Activated CD4-positive, alpha-beta memory T cell treated with anti-CD3 and anti-CD28 coated beads for 36 hours (primary cell): ENCODE measurements at regions of chr17 and their contacts with region 1.

Region 1: GRCh38 chr17:48024937-48025906 is 12.4 kb downstream of the COPZ2 start:
- DNase-seq: peak; percentile 99
- H3K4me3 Mint-ChIP-seq: peak overlapping the region; percentile 82
- H3K27ac Mint-ChIP-seq: peak overlapping the region; percentile 34
- H3K4me1 Mint-ChIP-seq: peaks cover 22% of the 10 kb centered on the region
- H3K27me3 Mint-ChIP-seq: peaks cover 11% of the 10 kb centered on the region

Region 2: GRCh38 chr17:47840740-47841603 is 184.2 kb before region 1 on chr17 and contains the start of gene SCRN2:
- CTCF ChIA-PET with region 1: no interaction called
- POLR2A ChIA-PET with region 1: no interaction called
- intact Hi-C with region 1: loop called (anchors 5 kb)
- DNase-seq: peak; percentile 95
- H3K4me3 Mint-ChIP-seq: peak within 1 kb of the TSS; percentile 91
- H3K27ac Mint-ChIP-seq: peak within 1 kb of the TSS; percentile 70
- H3K4me1 Mint-ChIP-seq: peaks cover 30% of the 10 kb centered on the region
- H3K27me3 Mint-ChIP-seq: peaks cover 15% of the 10 kb centered on the region
- total RNA-seq, gene SCRN2: 20.6 to 21.0 TPM

Region 3: DNA sequence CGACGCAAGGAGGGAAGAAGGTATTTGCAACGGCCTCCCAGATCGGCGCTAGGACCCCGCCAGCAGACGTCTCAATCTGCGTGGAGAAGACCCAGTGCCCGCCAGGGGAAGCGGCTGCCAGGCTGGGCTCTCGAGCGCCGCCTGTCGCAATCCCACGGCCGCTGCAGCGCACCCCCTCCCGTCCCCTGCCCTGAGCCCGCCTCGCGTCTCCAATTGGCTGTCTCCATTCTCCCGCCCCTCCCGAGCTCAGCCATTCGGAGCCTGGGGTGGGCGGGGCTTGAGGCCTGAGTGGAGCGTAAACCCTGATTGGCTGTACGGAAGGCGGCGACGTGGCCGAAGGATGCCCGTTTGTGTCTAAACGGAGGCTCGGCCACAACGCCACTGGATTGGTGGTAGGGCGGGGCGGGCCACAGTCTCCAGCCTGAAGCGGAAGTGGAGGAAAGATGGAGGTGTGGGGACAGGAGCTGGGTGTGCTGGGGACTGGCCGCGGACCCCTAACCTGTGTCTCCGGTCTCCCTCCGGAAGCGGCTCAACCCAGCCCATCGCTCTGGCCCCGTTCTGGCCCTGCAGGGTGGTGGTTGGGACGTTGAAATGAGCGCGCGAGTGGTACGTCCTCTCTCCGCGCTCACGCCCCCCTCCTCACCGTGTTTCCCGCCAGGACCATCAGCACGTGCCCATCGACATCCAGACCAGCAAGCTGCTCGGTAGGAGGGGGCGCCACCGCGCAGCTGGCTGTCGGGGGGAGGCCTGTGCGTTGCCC is 54.3 kb before region 1 on chr17 and contains the start of gene CDK5RAP3:
- CTCF ChIA-PET with region 1: interaction called, 4 read pairs
- POLR2A ChIA-PET with region 1: interaction called, 3 read pairs
- intact Hi-C with region 1: loop called (anchors 2 kb)
- DNase-seq: peak; percentile 100
- H3K4me3 Mint-ChIP-seq: peak within 1 kb of the TSS; percentile 88
- H3K27ac Mint-ChIP-seq: peak within 1 kb of the TSS; percentile 85
- H3K4me1 Mint-ChIP-seq: peaks cover 22% of the 10 kb centered on the region
- H3K27me3 Mint-ChIP-seq: no peaks in the 10 kb centered on the region
- total RNA-seq, gene CDK5RAP3: 170 to 183 TPM

Region 4: GRCh38 chr17:47990962-47991731 is 34.1 kb before region 1 on chr17:
- CTCF ChIA-PET with region 1: no interaction called
- POLR2A ChIA-PET with region 1: no interaction called
- intact Hi-C with region 1: no loop called
- DNase-seq: no peak
- H3K4me3 Mint-ChIP-seq: no peak overlapping the region
- H3K27ac Mint-ChIP-seq: no peak overlapping the region
- H3K4me1 Mint-ChIP-seq: peaks cover 2% of the 10 kb centered on the region
- H3K27me3 Mint-ChIP-seq: peaks cover 3% of the 10 kb centered on the region

Region 5: GRCh38 chr17:48047741-48048383 is 22.6 kb after region 1 on chr17 and contains the start of gene NFE2L1:
- CTCF ChIA-PET with region 1: interaction called, 77 read pairs
- POLR2A ChIA-PET with region 1: interaction called, 10 read pairs
- intact Hi-C with region 1: loop called (anchors 1 kb)
- DNase-seq: peak; percentile 100
- H3K4me3 Mint-ChIP-seq: peak within 1 kb of the TSS; percentile 97
- H3K27ac Mint-ChIP-seq: peak within 1 kb of the TSS; percentile 97
- H3K4me1 Mint-ChIP-seq: peaks cover 50% of the 10 kb centered on the region
- H3K27me3 Mint-ChIP-seq: no peaks in the 10 kb centered on the region
- total RNA-seq, gene NFE2L1: 82.4 to 84.1 TPM

Region 6: GRCh38 chr17:48074315-48075081 is 49.3 kb after region 1 on chr17:
- CTCF ChIA-PET with region 1: interaction called, 137 read pairs
- POLR2A ChIA-PET with region 1: no interaction called
- intact Hi-C with region 1: loop called (anchors 1 kb)
- DNase-seq: peak; percentile 78
- H3K4me3 Mint-ChIP-seq: no peak overlapping the region
- H3K27ac Mint-ChIP-seq: no peak overlapping the region
- H3K4me1 Mint-ChIP-seq: no peaks in the 10 kb centered on the region
- H3K27me3 Mint-ChIP-seq: no peaks in the 10 kb centered on the region

Region 7: GRCh38 chr17:48123111-48123510 is 97.9 kb after region 1 on chr17:
- CTCF ChIA-PET with region 1: interaction called, 50 read pairs
- POLR2A ChIA-PET with region 1: no interaction called
- intact Hi-C with region 1: no loop called
- DNase-seq: no peak
- H3K4me3 Mint-ChIP-seq: no peak overlapping the region
- H3K27ac Mint-ChIP-seq: peak overlapping the region; percentile 62
- H3K4me1 Mint-ChIP-seq: peaks cover 6% of the 10 kb centered on the region
- H3K27me3 Mint-ChIP-seq: no peaks in the 10 kb centered on the region

Region 8: GRCh38 chr17:48144976-48145798 is 120.0 kb after region 1 on chr17:
- CTCF ChIA-PET with region 1: no interaction called
- POLR2A ChIA-PET with region 1: no interaction called
- intact Hi-C with region 1: no loop called
- DNase-seq: no peak
- H3K4me3 Mint-ChIP-seq: no peak overlapping the region
- H3K27ac Mint-ChIP-seq: no peak overlapping the region
- H3K4me1 Mint-ChIP-seq: peaks cover 8% of the 10 kb centered on the region
- H3K27me3 Mint-ChIP-seq: no peaks in the 10 kb centered on the region

Region 9: GRCh38 chr17:48610282-48611211 is 585.3 kb after region 1 on chr17 and contains the start of gene HOXB7:
- CTCF ChIA-PET with region 1: interaction called, 5 read pairs
- POLR2A ChIA-PET with region 1: no interaction called
- intact Hi-C with region 1: loop called (anchors 5 kb)
- DNase-seq: peak; percentile 78
- H3K4me3 Mint-ChIP-seq: peak within 1 kb of the TSS; percentile 86
- H3K27ac Mint-ChIP-seq: peak within 1 kb of the TSS; percentile 41
- H3K4me1 Mint-ChIP-seq: peaks cover 37% of the 10 kb centered on the region
- H3K27me3 Mint-ChIP-seq: peaks cover 64% of the 10 kb centered on the region
- total RNA-seq, gene HOXB7: 0.36 to 0.44 TPM